Uterus (tissue), 4 donors: ENCODE measurements at regions of chr3 and their contacts with region 1.

Region 1: GRCh38 chr3:142863010-142863715 is 25.7 kb downstream of the PCOLCE2 start:
- DNase-seq: no peak
- H3K4me3 ChIP-seq: no peak overlapping the region
- H3K27ac ChIP-seq: no peak overlapping the region
- H3K4me1 ChIP-seq: no peaks in the 10 kb centered on the region
- H3K27me3 ChIP-seq: no peaks in the 10 kb centered on the region
- CTCF ChIP-seq: no peak
- POLR2A ChIP-seq: no peak

Region 2: GRCh38 chr3:142628801-142629200 is 234.4 kb before region 1 on chr3:
- intact Hi-C with region 1: no loop called
- DNase-seq: no peak
- H3K4me3 ChIP-seq: no peak overlapping the region
- H3K27ac ChIP-seq: no peak overlapping the region
- H3K4me1 ChIP-seq: no peaks in the 10 kb centered on the region
- H3K27me3 ChIP-seq: no peaks in the 10 kb centered on the region
- CTCF ChIP-seq: no peak
- POLR2A ChIP-seq: no peak

Region 3: GRCh38 chr3:142846779-142847577 is 16.2 kb before region 1 on chr3:
- intact Hi-C with region 1: loop called (anchors 2 kb)
- DNase-seq: no peak
- H3K4me3 ChIP-seq: no peak overlapping the region
- H3K27ac ChIP-seq: no peak overlapping the region
- H3K4me1 ChIP-seq: no peaks in the 10 kb centered on the region
- H3K27me3 ChIP-seq: no peaks in the 10 kb centered on the region
- CTCF ChIP-seq: no peak
- POLR2A ChIP-seq: no peak

Region 4: DNA sequence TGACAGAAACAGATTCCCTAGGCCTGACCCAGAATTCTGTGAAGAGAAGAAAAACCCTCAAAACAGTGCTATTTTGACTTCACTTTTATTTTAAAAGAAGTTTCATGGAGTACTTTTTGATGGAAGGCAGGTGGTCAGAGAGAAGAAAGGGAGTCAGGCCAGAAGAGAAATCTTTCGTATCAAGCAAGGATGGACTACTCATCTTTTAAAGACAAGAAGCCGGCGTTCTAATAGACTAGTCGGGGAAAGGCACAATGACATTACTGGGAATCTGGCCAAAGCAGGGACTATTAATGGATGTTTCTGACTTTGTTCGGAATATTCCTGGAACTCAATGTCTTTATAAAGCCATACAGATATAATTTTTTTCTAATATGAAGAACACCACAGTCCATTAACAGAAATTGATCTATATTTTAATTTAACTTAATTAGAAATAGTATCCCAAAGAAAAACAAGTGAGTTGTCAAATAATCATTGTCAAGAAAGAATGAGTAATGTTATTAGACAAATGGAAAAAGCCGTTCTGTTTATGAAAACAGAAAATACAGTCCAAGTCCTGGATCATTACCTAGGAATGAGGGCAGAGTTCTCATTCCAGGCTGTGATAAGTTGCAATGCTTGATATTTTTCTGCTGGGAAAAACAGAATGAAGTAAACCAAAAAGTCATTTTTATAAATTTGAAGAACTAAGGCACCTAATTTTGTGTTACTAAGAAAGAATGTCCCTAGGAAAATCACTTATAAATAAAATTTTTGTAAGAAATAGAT is 49.4 kb after region 1 on chr3:
- intact Hi-C with region 1: no loop called
- DNase-seq: no peak
- H3K4me3 ChIP-seq: no peak overlapping the region
- H3K27ac ChIP-seq: peak overlapping the region; percentile 52 to 57
- H3K4me1 ChIP-seq: no peaks in the 10 kb centered on the region
- H3K27me3 ChIP-seq: no peaks in the 10 kb centered on the region
- CTCF ChIP-seq: no peak
- POLR2A ChIP-seq: no peak

Region 5: DNA sequence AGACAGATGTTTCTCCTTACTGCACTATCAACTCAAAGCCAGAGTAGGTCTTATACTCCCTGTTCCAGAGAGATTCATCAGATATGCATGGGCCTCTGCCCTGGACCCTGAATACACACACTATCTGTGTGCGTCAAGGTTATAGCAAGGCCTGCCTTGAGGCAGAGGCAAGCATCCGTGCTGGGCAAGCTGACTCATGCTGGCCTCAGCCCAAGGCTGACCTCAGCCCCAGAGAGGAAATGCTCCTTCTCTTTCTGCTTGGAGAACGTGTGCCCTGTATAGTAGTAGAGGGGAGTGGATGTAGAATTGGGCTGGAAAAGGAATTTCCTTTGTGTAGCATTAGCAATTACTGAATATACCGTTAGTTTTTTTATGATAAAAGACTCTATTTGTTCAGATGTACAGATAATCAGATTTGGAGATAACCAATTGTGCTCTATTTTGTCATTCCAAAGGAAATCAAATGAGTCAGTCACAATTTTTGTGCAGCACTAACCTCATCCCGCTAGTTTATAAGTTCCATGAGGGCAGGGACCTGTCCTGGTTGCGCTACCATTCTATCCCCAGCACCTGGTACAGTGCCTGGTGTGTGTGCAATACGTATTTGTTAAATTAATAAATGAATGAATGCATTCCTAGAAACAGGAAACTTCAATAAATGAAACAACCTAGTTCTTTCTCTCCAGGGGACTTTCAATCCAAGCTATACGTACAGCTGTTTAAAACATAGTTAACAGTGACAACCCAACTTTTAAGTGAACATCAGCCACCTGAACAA is 113.6 kb after region 1 on chr3:
- intact Hi-C with region 1: no loop called
- DNase-seq: peak; percentile 42 to 68
- H3K4me3 ChIP-seq: no peak overlapping the region
- H3K27ac ChIP-seq: no peak overlapping the region
- H3K4me1 ChIP-seq: no peaks in the 10 kb centered on the region
- H3K27me3 ChIP-seq: no peaks in the 10 kb centered on the region
- CTCF ChIP-seq: no peak
- POLR2A ChIP-seq: no peak